Naive thymus-derived CD8-positive, alpha-beta T cell (primary cell): ENCODE measurements at regions of chr14 and their contacts with region 1.

Region 1: GRCh38 chr14:61321385-61322010 is at the start of gene PRKCH:
- DNase-seq: peak; percentile 71 to 93 (median 82)
- ATAC-seq: peak; percentile 65 to 72
- H3K4me3 Mint-ChIP-seq: peak within 1 kb of the TSS in 9 of 10 donors; percentile 96 to 100 (median 98)
- H3K27ac Mint-ChIP-seq: peak within 1 kb of the TSS in 9 of 10 donors; percentile 95 to 99 (median 97)
- H3K4me1 Mint-ChIP-seq: peaks cover 14 to 33% (median 26%) of the 10 kb centered on the region in 4 donors
- H3K27me3 Mint-ChIP-seq: no peaks in the 10 kb centered on the region
- polyA plus RNA-seq, gene PRKCH: 184 to 264 (median 209) TPM

Region 2: DNA sequence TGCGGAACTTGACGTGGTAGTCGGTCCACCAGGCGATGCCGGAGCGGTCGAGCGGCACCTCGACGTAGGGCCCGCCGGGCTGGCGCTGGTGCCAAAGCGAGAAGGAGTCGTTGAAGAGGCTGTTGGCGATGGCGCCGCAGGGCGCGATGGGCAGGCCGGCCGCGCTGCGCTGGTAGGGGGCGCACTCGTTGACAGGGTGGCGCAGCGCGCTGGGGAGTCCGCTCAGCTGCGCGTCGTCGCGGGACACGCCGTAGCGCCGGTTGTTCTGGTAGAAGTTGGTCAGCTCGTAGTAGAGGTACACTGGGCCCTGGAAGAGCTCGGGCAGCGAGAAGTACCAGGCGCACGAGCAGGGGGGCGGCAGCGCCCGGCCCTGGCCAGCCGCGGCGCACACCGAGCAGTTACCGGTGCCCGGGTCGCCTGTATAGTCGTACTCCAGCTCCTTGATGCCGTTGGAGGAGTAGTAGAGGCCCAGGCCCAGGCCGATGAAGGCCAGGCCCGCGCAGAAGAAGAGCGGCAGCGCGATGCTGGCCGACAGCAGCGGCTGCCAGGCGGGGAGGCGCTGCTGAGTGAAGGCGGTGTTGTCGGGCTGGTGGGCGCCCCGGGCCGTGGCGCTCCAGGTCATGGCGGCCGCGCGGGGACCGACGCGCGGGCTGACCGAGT is 40.8 kb before region 1 on chr14:
- POLR2A ChIA-PET with region 1: interaction called, 12 read pairs
- DNase-seq: peak; percentile 64 to 84 (median 76)
- ATAC-seq: peak; percentile 84 to 85
- H3K4me3 Mint-ChIP-seq: peak overlapping the region; percentile 86 to 97 (median 92)
- H3K27ac Mint-ChIP-seq: peak overlapping the region; percentile 89 to 98 (median 94)
- H3K4me1 Mint-ChIP-seq: peaks cover 11 to 38% (median 30%) of the 10 kb centered on the region in 4 donors
- H3K27me3 Mint-ChIP-seq: peaks cover 0 to 20% (median 0%) of the 10 kb centered on the region in 5 donors

Region 3: DNA sequence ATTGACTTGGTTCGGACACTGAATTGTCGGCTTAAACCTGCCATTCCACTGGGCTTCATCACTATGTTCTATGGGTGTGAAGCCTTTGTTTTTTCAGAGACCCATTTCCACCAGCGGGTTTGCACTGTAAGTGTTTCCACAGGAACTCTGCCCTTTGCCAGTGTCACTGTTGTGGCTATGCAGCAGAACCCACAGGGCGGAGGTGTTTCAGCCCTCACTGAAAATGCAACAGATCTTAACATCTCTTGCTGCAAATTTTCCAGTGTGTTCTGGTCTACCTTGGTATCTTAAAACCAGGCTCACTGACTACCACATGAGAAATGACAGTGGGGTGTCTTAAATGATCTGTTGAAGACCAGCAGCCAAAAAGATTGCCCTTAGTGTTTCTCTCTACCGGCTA is 21.0 kb after region 1 on chr14:
- POLR2A ChIA-PET with region 1: interaction called, 259 read pairs
- DNase-seq: peak; percentile 48 to 93 (median 84)
- ATAC-seq: peak; percentile 52 to 64
- H3K4me3 Mint-ChIP-seq: peak overlapping the region; percentile 69 to 92 (median 86)
- H3K27ac Mint-ChIP-seq: peak overlapping the region in 9 of 10 donors; percentile 94 to 100 (median 99)
- H3K4me1 Mint-ChIP-seq: peaks cover 53 to 97% (median 94%) of the 10 kb centered on the region in 4 donors
- H3K27me3 Mint-ChIP-seq: no peaks in the 10 kb centered on the region

Region 4: GRCh38 chr14:61350427-61351270 is 29.2 kb after region 1 on chr14:
- POLR2A ChIA-PET with region 1: interaction called, 53 read pairs
- DNase-seq: peak in 1 of 10 donors; percentile 47
- ATAC-seq: peak; percentile 26 to 69
- H3K4me3 Mint-ChIP-seq: peak overlapping the region; percentile 56 to 92 (median 83)
- H3K27ac Mint-ChIP-seq: peak overlapping the region in 9 of 10 donors; percentile 94 to 100 (median 99)
- H3K4me1 Mint-ChIP-seq: peaks cover 51 to 98% (median 96%) of the 10 kb centered on the region in 4 donors
- H3K27me3 Mint-ChIP-seq: no peaks in the 10 kb centered on the region

Region 5: GRCh38 chr14:61452452-61452851 is 131.0 kb after region 1 on chr14:
- POLR2A ChIA-PET with region 1: interaction called, 16 read pairs
- DNase-seq: peak in 8 of 10 donors; percentile 37 to 77 (median 63)
- ATAC-seq: peak; percentile 85 to 88
- H3K4me3 Mint-ChIP-seq: peak overlapping the region; percentile 66 to 85 (median 78)
- H3K27ac Mint-ChIP-seq: peak overlapping the region; percentile 87 to 97 (median 94)
- H3K4me1 Mint-ChIP-seq: peaks cover 57 to 100% (median 97%) of the 10 kb centered on the region in 4 donors
- H3K27me3 Mint-ChIP-seq: no peaks in the 10 kb centered on the region

Region 6: GRCh38 chr14:61467296-61467695 is 145.8 kb after region 1 on chr14:
- POLR2A ChIA-PET with region 1: no interaction called
- DNase-seq: no peak
- ATAC-seq: no peak
- H3K4me3 Mint-ChIP-seq: peak overlapping the region in 1 of 10 donors; percentile 30
- H3K27ac Mint-ChIP-seq: peak overlapping the region in 9 of 10 donors; percentile 60 to 100 (median 95)
- H3K4me1 Mint-ChIP-seq: peaks cover 45 to 93% (median 83%) of the 10 kb centered on the region in 4 donors
- H3K27me3 Mint-ChIP-seq: no peaks in the 10 kb centered on the region